ENCODE measurements at regions of chr9 and their contacts with region 1.

Region 1: GRCh38 chr9:128072144-128073021 is 4.4 kb downstream of the SLC25A25 start:
- DNase-seq: no peak
- ATAC-seq: no peak
- H3K4me3 ChIP-seq: no peak overlapping the region
- H3K27ac ChIP-seq: peak overlapping the region; percentile 59; the same call in 1 of the 2 replicates
- H3K4me1 ChIP-seq: peaks cover 14% of the 10 kb centered on the region
- H3K27me3 ChIP-seq: no peaks in the 10 kb centered on the region
- CTCF ChIP-seq: no peak

Region 2: DNA sequence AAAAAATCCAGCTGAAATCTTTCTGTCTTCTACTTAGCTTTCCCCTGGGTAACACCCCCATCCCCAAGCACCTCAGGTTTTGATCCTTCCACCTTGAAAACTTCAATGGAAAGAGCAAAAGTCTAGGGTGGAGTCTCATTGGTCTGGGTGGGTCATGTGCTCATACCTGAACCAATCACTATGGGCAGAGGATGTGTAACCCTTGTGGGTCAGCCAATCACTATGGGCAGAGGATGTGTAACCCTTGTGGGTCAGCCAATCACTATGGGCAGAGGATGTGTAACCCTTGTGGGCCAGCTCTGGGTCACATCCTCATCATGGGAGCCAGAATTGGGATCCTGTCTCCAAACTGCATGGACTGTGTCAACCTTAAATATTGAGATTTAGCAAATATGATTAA is 23.7 kb before region 1 on chr9:
- CTCF ChIA-PET with region 1: no interaction called
- POLR2A ChIA-PET with region 1: no interaction called
- in situ Hi-C with region 1: no loop called
- intact Hi-C with region 1: no loop called
- DNase-seq: no peak
- ATAC-seq: no peak
- H3K4me3 ChIP-seq: no peak overlapping the region
- H3K27ac ChIP-seq: no peak overlapping the region
- H3K4me1 ChIP-seq: no peaks in the 10 kb centered on the region
- H3K27me3 ChIP-seq: no peaks in the 10 kb centered on the region
- CTCF ChIP-seq: no peak

Region 3: DNA sequence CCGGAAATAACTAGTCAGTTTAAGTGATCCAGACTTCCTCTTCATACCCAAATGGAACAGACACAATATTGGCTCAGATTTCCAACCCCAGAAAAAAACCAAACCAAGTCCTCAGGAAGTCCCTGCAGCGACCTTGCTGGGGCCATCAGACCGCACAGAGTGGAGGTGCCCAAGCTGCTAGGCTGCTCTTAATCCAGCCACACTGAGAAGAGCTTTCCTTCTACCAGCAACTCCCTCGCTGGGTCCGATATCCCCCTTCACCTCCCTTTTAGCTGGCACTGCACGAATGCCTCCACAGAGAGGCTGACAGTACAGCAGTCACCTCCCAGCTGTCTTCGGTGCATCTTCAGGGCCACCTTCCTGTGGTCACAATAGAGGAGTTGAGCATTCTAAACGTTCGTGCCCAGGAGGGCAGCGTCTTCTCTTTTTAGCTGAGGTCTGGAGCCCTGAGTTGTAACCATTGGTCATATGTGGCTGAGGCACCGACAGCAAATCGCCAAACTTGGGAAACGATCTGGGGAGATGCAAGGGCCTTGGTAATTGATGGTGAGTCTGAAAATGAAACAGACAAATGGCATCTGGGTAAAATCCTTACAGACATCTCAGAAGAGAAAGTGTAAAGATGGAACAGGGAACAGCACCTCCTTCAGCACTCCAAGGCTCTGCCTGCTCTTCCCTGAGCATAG is 11.0 kb before region 1 on chr9:
- CTCF ChIA-PET with region 1: no interaction called
- POLR2A ChIA-PET with region 1: interaction called, 13 read pairs
- in situ Hi-C with region 1: no loop called
- intact Hi-C with region 1: no loop called
- DNase-seq: no peak
- ATAC-seq: no peak
- H3K4me3 ChIP-seq: no peak overlapping the region
- H3K27ac ChIP-seq: no peak overlapping the region
- H3K4me1 ChIP-seq: peaks cover 9% of the 10 kb centered on the region
- H3K27me3 ChIP-seq: no peaks in the 10 kb centered on the region
- CTCF ChIP-seq: no peak

Region 4: DNA sequence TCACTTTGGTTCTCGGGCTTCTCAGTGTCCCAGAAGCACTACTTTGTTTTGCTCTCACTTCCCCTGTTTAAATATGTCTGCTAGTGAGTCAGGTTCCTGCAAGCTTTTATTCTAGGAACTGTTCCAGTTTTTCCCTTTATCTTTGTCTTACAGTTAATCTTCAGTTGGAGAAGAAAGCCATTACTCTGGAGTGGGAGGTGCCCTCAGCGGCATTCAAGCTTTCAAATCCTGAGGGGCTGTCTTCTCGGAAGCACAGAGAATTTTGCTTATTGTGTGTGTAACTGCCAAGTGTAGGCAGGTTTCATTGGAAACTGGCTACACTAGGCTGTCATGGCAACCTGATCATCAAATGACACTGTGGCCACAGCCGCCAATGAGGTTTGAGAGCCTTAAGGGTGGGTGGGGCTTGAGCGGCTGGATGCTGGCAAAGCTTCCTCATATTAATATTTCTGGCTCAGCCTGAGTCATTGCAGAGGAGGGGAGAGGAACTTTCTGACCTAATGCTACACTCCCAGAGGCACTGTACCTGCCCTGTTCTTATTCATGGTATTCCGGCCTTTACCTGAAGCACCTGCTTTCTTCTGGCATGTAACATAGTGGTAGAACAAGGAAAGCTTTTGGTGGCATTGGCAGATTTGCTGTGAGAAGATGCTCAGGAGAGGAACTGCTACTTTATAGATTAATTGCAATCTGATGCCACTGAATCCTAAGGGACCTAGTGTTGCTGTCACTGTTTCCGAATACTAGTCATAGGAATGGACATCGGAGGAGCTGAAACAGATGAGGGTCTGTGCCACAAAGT is 22.0 kb after region 1 on chr9:
- CTCF ChIA-PET with region 1: no interaction called
- POLR2A ChIA-PET with region 1: no interaction called
- in situ Hi-C with region 1: no loop called
- intact Hi-C with region 1: no loop called
- DNase-seq: peak; percentile 46
- ATAC-seq: peak; percentile 89
- H3K4me3 ChIP-seq: no peak overlapping the region
- H3K27ac ChIP-seq: no peak overlapping the region
- H3K4me1 ChIP-seq: peaks cover 20% of the 10 kb centered on the region
- H3K27me3 ChIP-seq: no peaks in the 10 kb centered on the region
- CTCF ChIP-seq: no peak